PC-9 (cell line): ENCODE measurements at regions of chr17 and their contacts with region 1.

Region 1: GRCh38 chr17:35141681-35142466 is at the start of gene NLE1:
- DNase-seq: peak; percentile 49 to 79
- H3K4me3 ChIP-seq: peak within 1 kb of the TSS; percentile 100
- H3K27ac ChIP-seq: no peak within 1 kb of the TSS
- H3K4me1 ChIP-seq: peaks cover 6% of the 10 kb centered on the region
- H3K27me3 ChIP-seq: peaks cover 10% of the 10 kb centered on the region; the same call in 1 of the 2 replicates
- CTCF ChIP-seq: peak; percentile 85
- total RNA-seq, gene NLE1: 16.4 and 20.8 TPM in 2 replicates

Region 2: DNA sequence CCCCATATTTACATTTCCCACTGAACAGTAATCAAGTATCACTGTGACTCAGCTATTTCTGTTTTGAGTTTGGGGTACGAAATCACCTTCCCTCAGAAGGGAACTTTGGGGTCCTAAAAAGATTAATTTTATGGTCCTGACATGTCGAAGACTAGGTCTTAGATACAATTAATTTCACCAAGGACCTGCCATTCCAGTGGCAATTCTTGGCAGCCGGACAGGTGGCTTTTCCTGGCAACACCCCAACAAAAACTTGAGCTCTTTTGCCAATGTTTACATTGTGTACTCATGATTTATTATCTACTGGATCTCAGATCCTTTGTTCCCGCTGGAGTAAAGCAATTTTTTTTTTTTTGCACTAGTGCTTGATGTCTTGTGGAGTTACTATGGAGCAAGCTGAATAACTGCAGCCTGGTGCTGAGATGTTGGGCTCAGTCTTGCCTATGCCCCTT is 115.4 kb after region 1 on chr17:
- CTCF ChIA-PET with region 1: interaction called, 7 read pairs
- POLR2A ChIA-PET with region 1: no interaction called
- intact Hi-C with region 1: loop called (anchors 5 kb)
- DNase-seq: peak; percentile 86 to 92
- H3K4me3 ChIP-seq: 0 out of 2 replicates have a peak overlapping the region, but pooled peaks have one; percentile 5
- H3K27ac ChIP-seq: peak overlapping the region; percentile 50
- H3K4me1 ChIP-seq: peaks cover 42% of the 10 kb centered on the region
- H3K27me3 ChIP-seq: no peaks in the 10 kb centered on the region
- CTCF ChIP-seq: no peak

Region 3: GRCh38 chr17:35312790-35313711 is 171.2 kb after region 1 on chr17:
- CTCF ChIA-PET with region 1: no interaction called
- POLR2A ChIA-PET with region 1: no interaction called
- intact Hi-C with region 1: loop called (anchors 10 kb)
- DNase-seq: peak in 1 of 2 experiments; percentile 22
- H3K4me3 ChIP-seq: no peak overlapping the region
- H3K27ac ChIP-seq: no peak overlapping the region
- H3K4me1 ChIP-seq: no peaks in the 10 kb centered on the region
- H3K27me3 ChIP-seq: peaks cover 4% of the 10 kb centered on the region; the same call in 1 of the 2 replicates
- CTCF ChIP-seq: peak; percentile 82

Region 4: DNA sequence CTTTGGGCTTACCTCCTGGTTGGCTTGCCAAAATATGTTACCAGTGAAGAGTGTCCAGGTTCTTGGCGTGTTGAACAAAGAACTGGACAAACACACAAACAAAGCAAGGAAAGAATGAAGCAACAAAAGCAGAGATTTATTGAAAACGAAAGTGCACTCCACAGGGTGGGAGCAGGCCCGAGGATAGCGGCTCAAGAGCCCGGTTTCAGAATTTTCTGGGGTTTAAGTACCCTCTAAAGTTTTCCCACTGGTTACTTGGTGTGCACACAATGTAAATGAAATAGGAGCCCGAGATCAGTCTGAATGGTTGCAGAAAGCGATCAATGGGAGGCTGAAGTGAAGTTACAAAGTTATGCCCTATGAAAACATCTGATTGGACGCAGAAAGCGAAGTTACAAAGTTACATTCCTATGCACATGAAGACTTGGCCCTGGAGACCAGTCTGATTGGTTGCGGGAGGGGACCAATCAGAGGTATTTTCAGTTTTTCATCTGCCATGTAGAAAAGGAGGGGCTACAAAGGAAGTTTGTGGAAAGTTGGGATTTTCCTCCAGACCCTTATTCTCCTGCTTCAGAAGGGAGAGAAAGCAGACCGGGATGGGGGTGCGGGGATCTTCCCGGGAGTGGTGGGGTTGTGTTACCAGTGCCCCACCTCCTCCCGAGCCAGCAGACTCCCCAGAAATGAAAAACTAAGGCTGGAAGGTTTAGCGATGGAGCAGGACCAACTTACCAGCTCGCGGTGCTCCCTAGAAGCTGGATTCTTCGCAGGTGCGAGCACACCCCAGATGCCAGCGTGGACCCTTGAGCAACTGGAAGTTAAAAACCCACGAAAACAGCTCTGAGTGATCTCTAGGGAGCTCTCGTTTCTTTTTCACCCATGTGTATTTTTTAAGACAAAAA is 290.6 kb after region 1 on chr17 and contains the start of gene SLFN12:
- CTCF ChIA-PET with region 1: no interaction called
- POLR2A ChIA-PET with region 1: no interaction called
- intact Hi-C with region 1: loop called (anchors 5 kb)
- DNase-seq: peak; percentile 58 to 83
- H3K4me3 ChIP-seq: peak within 1 kb of the TSS; percentile 57
- H3K27ac ChIP-seq: peak within 1 kb of the TSS; percentile 44; the same call in 1 of the 2 replicates
- H3K4me1 ChIP-seq: peaks cover 18% of the 10 kb centered on the region
- H3K27me3 ChIP-seq: no peaks in the 10 kb centered on the region
- CTCF ChIP-seq: no peak
- total RNA-seq, gene SLFN12: 9.7 and 14.3 TPM in 2 replicates

Region 5: GRCh38 chr17:35529866-35530265 is 388.0 kb after region 1 on chr17:
- CTCF ChIA-PET with region 1: no interaction called
- POLR2A ChIA-PET with region 1: no interaction called
- intact Hi-C with region 1: loop called (anchors 5 kb)
- DNase-seq: no peak
- H3K4me3 ChIP-seq: no peak overlapping the region
- H3K27ac ChIP-seq: no peak overlapping the region
- H3K4me1 ChIP-seq: no peaks in the 10 kb centered on the region
- H3K27me3 ChIP-seq: peaks cover 17% of the 10 kb centered on the region
- CTCF ChIP-seq: no peak